ENCODE measurements at regions of chr4 and their contacts with region 1.

Region 1: DNA sequence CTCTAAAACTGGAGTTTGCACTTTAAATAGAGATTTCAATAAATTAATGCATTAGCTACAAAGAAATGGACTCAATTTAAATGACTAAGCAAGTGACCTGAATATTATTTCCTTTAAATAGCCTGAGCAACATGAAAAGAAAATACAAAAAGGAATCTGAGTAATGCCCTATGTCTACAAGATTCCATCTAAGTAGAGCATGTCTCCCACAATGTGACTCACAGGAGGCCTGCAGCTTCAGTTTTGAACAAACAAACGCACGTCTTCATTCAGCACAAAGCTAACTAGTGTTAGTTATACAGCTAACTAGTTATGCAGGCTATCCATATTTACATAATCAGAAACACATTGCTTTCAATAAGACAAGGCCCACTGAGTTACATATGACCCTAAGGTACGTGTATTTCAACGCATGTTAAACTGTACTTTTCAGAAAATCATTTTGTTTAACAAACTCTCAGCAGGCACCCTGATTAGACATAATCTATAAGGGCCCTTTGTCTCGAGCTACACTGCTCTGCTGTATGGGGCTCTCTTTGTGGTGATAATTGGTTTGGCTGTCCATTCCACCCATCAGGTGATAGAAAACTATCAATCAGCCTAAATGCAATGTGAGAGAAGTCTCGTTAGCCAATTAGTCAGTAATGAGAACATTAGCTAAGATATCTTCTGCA is 116.5 kb downstream of the MAML3 start:
- DNase-seq: peak; percentile 82
- ATAC-seq: peak; percentile 97
- H3K4me3 ChIP-seq: no peak overlapping the region; a peak in 1 of 4 replicates
- H3K27ac ChIP-seq: peak overlapping the region; percentile 94
- H3K4me1 ChIP-seq: peaks cover 32% of the 10 kb centered on the region
- H3K27me3 ChIP-seq: no peaks in the 10 kb centered on the region
- CTCF ChIP-seq: no peak

Region 2: DNA sequence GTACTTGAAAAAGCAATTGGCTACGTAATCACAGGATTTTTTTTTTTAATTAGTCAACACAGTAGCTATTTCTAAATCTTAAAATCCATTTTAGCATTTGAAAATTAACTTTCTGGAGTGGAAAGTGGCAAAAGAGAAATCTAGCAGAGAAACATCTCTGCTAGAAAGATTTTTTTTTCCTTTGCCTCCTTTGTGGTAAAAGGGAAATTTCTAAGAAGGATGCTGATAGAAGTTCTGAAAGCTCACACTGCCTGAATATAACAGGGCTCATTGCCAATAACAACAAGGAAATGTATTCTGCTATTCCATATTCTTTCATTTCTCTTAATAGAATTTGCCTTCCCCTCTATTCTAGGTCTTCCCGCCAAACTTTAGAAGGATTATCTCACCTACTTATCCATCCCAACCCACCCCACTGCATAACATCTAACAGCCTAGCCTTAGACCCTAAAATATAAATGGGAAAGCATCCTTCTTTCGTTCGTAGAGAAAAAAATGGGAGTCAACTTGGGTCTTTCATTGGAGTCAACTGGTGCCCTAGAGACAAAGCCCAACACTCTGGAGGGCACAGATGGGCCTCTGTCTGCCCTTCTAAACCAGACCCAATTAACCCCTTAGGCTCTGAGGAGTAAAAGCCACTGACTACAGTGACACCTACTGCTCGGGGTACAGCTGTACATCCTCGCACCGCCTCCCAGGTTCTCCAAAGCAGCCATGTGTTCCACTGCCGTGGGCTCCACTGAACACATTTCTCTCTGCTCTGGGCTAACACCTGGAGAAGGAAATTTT is 12.5 kb after region 1 on chr4:
- CTCF ChIA-PET with region 1: no interaction called
- POLR2A ChIA-PET with region 1: interaction called, 11 read pairs
- in situ Hi-C with region 1: no loop called
- intact Hi-C with region 1: no loop called
- DNase-seq: no peak
- ATAC-seq: peak; percentile 81
- H3K4me3 ChIP-seq: peak overlapping the region in 1 of 2 experiments; percentile 59; a peak in 3 of 4 replicates
- H3K27ac ChIP-seq: peak overlapping the region; percentile 82
- H3K4me1 ChIP-seq: peaks cover 46% of the 10 kb centered on the region
- H3K27me3 ChIP-seq: no peaks in the 10 kb centered on the region
- CTCF ChIP-seq: peak; percentile 80

Region 3: GRCh38 chr4:140085062-140085622 is 47.6 kb after region 1 on chr4:
- CTCF ChIA-PET with region 1: no interaction called
- POLR2A ChIA-PET with region 1: interaction called, 15 read pairs
- in situ Hi-C with region 1: no loop called
- intact Hi-C with region 1: no loop called
- DNase-seq: no peak
- ATAC-seq: peak; percentile 85
- H3K4me3 ChIP-seq: peak overlapping the region; percentile 6 to 40; a peak in 3 of 4 replicates
- H3K27ac ChIP-seq: peak overlapping the region; percentile 96
- H3K4me1 ChIP-seq: peaks cover 87% of the 10 kb centered on the region
- H3K27me3 ChIP-seq: no peaks in the 10 kb centered on the region
- CTCF ChIP-seq: no peak

Measured in Panc1 (cell line).